ENCODE measurements at regions of chr6 and their contacts with region 1.

Region 1: DNA sequence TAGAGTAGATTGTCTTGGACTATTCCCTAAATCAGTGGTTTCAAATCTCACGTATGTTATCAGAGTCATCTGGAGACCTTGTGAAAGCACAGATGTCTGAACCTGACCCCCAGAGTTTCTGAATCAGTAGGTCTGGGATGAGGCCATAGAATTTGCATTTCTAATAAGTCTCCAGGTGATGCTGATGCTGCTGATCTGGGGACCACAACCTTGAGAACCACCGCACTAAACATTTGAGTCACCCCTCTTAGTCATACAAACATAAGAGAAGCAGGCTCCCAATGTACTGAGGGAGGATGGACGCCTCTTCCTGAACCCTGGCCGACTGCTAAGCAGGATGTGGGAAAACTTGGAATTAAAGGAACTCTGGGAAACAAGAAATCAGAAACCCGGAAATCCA is 187.8 kb upstream of the PRDM1 start:
- DNase-seq: no peak
- H3K4me3 Mint-ChIP-seq: no peak overlapping the region
- H3K27ac Mint-ChIP-seq: no peak overlapping the region
- H3K4me1 Mint-ChIP-seq: peaks cover 34% of the 10 kb centered on the region
- H3K27me3 Mint-ChIP-seq: no peaks in the 10 kb centered on the region

Region 2: GRCh38 chr6:105620878-105621277 is 277.4 kb before region 1 on chr6:
- intact Hi-C with region 1: loop called (anchors 1 kb)
- DNase-seq: peak; percentile 19
- H3K4me3 Mint-ChIP-seq: peak overlapping the region; percentile 46
- H3K27ac Mint-ChIP-seq: peak overlapping the region; percentile 91
- H3K4me1 Mint-ChIP-seq: peaks cover 46% of the 10 kb centered on the region
- H3K27me3 Mint-ChIP-seq: peaks cover 2% of the 10 kb centered on the region

Region 3: GRCh38 chr6:105757512-105758200 is 140.6 kb before region 1 on chr6:
- intact Hi-C with region 1: loop called (anchors 1 kb)
- DNase-seq: peak; percentile 28
- H3K4me3 Mint-ChIP-seq: peak overlapping the region; percentile 64
- H3K27ac Mint-ChIP-seq: peak overlapping the region; percentile 77
- H3K4me1 Mint-ChIP-seq: peaks cover 61% of the 10 kb centered on the region
- H3K27me3 Mint-ChIP-seq: no peaks in the 10 kb centered on the region

Region 4: GRCh38 chr6:105880030-105880492 is 18.2 kb before region 1 on chr6:
- intact Hi-C with region 1: loop called (anchors 1 kb)
- DNase-seq: no peak
- H3K4me3 Mint-ChIP-seq: peak overlapping the region; percentile 32
- H3K27ac Mint-ChIP-seq: peak overlapping the region; percentile 5
- H3K4me1 Mint-ChIP-seq: peaks cover 60% of the 10 kb centered on the region
- H3K27me3 Mint-ChIP-seq: peaks cover 14% of the 10 kb centered on the region

Region 5: DNA sequence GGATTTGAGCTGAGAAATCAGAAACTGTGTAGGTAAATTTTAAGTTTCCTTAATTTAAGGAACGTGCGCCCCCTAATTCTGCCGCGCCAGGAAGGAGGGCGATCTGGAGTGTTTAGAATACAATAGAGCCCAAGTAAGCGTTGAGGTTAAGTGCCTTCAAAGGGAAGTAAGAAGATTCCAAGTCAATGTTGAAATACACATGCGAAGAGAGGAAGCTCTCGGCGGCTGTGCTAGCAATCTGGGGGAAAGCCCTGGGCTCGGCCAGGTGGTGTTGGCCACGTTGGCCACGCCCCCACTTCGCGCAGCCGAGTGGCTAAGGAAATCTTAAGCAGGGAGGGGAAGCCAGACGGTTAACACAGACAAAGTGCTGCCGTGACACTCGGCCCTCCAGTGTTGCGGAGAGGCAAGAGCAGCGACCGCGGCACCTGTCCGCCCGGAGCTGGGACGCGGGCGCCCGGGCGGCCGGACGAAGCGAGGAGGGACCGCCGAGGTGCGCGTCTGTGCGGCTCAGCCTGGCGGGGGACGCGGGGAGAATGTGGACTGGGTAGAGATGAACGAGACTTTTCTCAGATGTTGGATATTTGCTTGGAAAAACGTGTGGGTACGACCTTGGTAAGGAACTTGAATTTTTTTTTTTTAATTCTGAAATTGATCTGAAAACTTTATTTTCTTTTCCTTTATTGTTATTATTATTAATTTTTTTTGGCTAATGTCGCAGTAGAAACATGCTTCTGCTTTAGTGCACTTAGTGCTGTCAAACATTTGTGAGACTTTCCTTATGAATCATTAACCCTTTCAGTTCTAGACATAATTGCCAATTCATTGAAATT is 187.9 kb after region 1 on chr6 and contains the start of gene PRDM1:
- intact Hi-C with region 1: loop called (anchors 2 kb)
- DNase-seq: peak; percentile 83
- H3K4me3 Mint-ChIP-seq: peak within 1 kb of the TSS; percentile 96
- H3K27ac Mint-ChIP-seq: peak within 1 kb of the TSS; percentile 80
- H3K4me1 Mint-ChIP-seq: peaks cover 86% of the 10 kb centered on the region
- H3K27me3 Mint-ChIP-seq: peaks cover 7% of the 10 kb centered on the region
- total RNA-seq, gene PRDM1: 74.1 and 78.8 TPM in 2 replicates

Region 6: DNA sequence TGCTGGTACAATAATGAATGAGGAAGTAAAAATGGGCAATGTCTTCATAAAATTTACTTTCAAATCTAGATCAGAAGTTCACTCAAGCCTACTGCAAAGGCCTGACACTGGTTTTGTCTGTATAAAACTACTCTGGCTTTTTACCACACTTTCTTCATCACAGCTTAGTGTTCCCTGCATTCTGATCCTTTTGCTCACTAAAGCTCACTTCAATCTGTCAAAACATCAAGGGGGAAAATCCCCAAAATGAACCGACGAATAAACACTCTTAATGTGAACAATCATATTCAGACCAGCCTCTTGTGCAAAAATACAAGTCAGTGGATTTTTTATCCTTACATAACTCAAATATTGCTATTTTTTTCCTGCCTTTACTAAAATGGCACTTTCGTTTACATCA is 286.3 kb after region 1 on chr6:
- intact Hi-C with region 1: loop called (anchors 2 kb)
- DNase-seq: no peak
- H3K4me3 Mint-ChIP-seq: no peak overlapping the region
- H3K27ac Mint-ChIP-seq: no peak overlapping the region
- H3K4me1 Mint-ChIP-seq: peaks cover 70% of the 10 kb centered on the region
- H3K27me3 Mint-ChIP-seq: no peaks in the 10 kb centered on the region

Region 7: GRCh38 chr6:106421496-106421895 is 523.2 kb after region 1 on chr6:
- intact Hi-C with region 1: no loop called
- DNase-seq: no peak
- H3K4me3 Mint-ChIP-seq: no peak overlapping the region
- H3K27ac Mint-ChIP-seq: no peak overlapping the region
- H3K4me1 Mint-ChIP-seq: no peaks in the 10 kb centered on the region
- H3K27me3 Mint-ChIP-seq: peaks cover 14% of the 10 kb centered on the region